MCF 10A (cell line): ENCODE measurements at regions of chr2 and their contacts with region 1.

Region 1: GRCh38 chr2:134118279-134119116 is 135.4 kb upstream of the MGAT5 start:
- DNase-seq: peak; percentile 91
- H3K4me3 Mint-ChIP-seq: peak overlapping the region; percentile 26
- H3K27ac Mint-ChIP-seq: no peak overlapping the region
- H3K4me1 Mint-ChIP-seq: peaks cover 23% of the 10 kb centered on the region
- H3K27me3 Mint-ChIP-seq: no peaks in the 10 kb centered on the region
- CTCF ChIP-seq: peak; percentile 74

Region 2: DNA sequence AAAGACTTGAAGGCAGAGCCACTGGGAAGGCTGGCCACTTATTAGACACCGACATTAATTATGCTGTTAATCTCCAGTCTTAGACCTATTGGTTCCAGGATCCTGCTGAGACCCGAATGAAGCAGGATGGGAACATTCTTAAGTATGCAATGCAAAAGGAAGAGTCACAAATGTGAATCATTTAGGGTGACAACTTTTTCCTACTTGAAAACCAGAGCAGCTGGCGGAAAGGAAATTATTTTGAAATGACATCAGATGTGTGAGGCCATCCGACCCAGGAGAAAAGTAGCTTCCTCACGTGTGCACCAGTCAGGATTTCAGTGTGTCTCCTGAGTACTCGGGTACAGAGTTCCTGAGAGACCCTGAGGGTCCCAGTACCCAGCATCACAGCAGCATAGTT is 327.3 kb before region 1 on chr2:
- CTCF ChIA-PET with region 1: no interaction called
- POLR2A ChIA-PET with region 1: no interaction called
- intact Hi-C with region 1: no loop called
- DNase-seq: no peak
- H3K4me3 Mint-ChIP-seq: no peak overlapping the region
- H3K27ac Mint-ChIP-seq: no peak overlapping the region
- H3K4me1 Mint-ChIP-seq: no peaks in the 10 kb centered on the region
- H3K27me3 Mint-ChIP-seq: no peaks in the 10 kb centered on the region
- CTCF ChIP-seq: no peak

Region 3: GRCh38 chr2:133844214-133844892 is 274.1 kb before region 1 on chr2:
- CTCF ChIA-PET with region 1: no interaction called
- POLR2A ChIA-PET with region 1: no interaction called
- intact Hi-C with region 1: no loop called
- DNase-seq: peak; percentile 84
- H3K4me3 Mint-ChIP-seq: no peak overlapping the region
- H3K27ac Mint-ChIP-seq: no peak overlapping the region
- H3K4me1 Mint-ChIP-seq: peaks cover 15% of the 10 kb centered on the region
- H3K27me3 Mint-ChIP-seq: no peaks in the 10 kb centered on the region
- CTCF ChIP-seq: peak; percentile 90

Region 4: DNA sequence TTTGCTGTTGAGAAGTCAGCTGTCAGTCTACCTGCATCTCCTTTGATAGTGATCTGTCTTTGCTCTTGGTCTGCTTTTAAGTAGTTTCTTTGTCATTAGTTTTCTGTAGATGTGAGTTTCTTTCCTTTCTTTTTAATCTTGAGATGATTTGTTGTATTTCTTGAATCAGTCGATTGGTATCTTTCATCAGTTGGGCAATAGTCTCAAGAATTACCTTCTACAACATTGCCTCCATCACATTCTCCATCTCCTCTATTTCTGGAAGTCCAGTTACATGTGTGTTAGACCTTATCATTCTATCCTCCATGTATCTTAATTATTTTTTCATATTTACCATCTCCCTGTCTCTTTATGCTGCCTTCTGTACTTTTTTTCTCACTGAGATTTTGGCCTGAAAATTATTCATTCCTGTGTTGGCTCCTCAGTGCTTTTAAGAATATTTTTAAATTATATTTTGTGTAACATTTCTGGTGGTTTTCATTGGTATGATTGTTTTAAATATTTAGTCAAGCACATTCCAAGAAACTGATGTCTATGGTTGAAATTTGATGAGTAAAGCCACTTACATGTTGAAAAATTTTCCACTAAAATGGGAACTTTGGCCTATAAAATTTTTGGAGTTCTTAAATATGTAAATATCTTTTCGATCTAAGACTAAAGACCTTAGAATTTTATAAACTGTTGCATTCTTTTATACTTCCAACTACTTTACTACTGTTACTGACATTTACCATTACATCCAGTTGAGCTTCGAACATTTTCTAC is 104.1 kb before region 1 on chr2:
- CTCF ChIA-PET with region 1: no interaction called
- POLR2A ChIA-PET with region 1: no interaction called
- intact Hi-C with region 1: no loop called
- DNase-seq: no peak
- H3K4me3 Mint-ChIP-seq: no peak overlapping the region
- H3K27ac Mint-ChIP-seq: no peak overlapping the region
- H3K4me1 Mint-ChIP-seq: no peaks in the 10 kb centered on the region
- H3K27me3 Mint-ChIP-seq: no peaks in the 10 kb centered on the region
- CTCF ChIP-seq: no peak

Region 5: DNA sequence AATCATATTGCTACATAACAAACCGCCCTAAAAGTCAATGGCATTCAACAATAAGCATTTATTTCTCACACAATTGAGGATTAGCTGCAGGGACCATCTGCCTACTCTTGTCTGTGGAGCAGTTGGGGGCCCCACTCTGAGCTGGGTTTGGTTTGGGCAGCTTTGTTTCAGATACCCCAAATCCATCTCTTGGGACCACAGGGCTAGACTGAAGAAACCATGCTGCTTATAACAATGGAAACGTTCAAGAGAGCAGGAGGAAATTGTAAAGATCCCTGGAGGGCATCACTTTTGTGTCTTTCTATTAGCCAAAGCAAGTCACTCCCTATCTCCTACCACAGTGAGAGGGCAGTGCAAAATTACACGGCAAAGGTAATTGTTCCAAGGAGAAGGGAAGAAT is 11.1 kb before region 1 on chr2:
- CTCF ChIA-PET with region 1: interaction called, 11 read pairs
- POLR2A ChIA-PET with region 1: no interaction called
- intact Hi-C with region 1: no loop called
- DNase-seq: no peak
- H3K4me3 Mint-ChIP-seq: no peak overlapping the region
- H3K27ac Mint-ChIP-seq: no peak overlapping the region
- H3K4me1 Mint-ChIP-seq: no peaks in the 10 kb centered on the region
- H3K27me3 Mint-ChIP-seq: peaks cover 14% of the 10 kb centered on the region
- CTCF ChIP-seq: no peak

Region 6: DNA sequence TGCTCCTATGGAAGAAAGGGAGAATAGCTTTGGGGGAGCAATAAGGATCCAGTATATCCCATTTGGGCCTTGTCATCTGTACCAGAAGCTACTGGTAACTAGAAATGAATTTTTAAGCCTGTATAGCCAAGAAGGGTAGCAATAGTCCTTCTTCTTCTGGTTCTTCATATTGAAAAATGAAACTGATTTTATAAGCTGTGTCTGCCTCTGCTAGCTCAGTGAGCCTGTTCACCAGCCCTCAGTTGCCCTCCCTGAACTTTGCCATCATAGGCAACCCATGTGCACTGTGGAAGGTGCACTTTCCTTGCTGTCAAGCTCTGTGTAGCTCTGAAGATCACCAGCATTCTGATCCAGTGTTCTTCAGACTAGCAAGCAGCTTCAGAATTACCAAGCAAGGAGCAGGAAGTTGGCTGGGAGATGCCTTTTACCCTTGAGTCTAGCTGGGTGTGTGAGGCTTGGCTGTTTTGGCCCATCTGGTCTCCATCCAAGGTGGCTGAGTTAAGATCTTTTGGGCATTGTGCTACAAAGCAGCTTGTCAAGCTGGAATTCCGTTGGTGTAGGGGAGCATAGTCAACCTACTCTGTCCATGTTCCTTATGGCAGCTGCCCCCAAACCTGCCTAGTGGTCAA is 79.6 kb after region 1 on chr2:
- CTCF ChIA-PET with region 1: interaction called, 47 read pairs
- POLR2A ChIA-PET with region 1: interaction called, 3 read pairs
- intact Hi-C with region 1: no loop called
- DNase-seq: no peak
- H3K4me3 Mint-ChIP-seq: no peak overlapping the region
- H3K27ac Mint-ChIP-seq: no peak overlapping the region
- H3K4me1 Mint-ChIP-seq: peaks cover 17% of the 10 kb centered on the region
- H3K27me3 Mint-ChIP-seq: no peaks in the 10 kb centered on the region
- CTCF ChIP-seq: no peak

Region 7: GRCh38 chr2:134245340-134245984 is 127.0 kb after region 1 on chr2:
- CTCF ChIA-PET with region 1: interaction called, 221 read pairs
- POLR2A ChIA-PET with region 1: interaction called, 12 read pairs
- intact Hi-C with region 1: loop called (anchors 1 kb)
- DNase-seq: peak; percentile 70
- H3K4me3 Mint-ChIP-seq: no peak overlapping the region
- H3K27ac Mint-ChIP-seq: no peak overlapping the region
- H3K4me1 Mint-ChIP-seq: peaks cover 6% of the 10 kb centered on the region
- H3K27me3 Mint-ChIP-seq: no peaks in the 10 kb centered on the region
- CTCF ChIP-seq: peak; percentile 75

Region 8: DNA sequence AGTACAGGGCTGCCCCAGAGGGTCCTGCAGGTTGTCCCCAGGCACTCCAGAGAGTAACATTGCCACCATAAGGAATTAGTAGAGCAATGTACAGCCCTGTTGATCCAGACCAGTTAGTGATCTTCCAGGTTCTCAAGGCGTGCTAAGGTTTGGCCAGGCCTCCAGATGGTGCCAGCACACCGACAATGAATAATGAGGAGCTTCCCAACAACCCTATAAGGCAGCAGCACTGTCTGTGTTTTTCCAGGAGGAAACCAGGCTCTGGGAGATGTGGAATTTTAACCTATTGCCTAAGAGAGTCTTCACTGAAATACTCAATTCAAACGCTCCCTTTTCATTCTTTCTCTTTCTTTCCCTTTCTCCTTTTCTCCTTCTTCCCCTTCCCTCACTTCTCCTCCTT is 257.4 kb after region 1 on chr2:
- CTCF ChIA-PET with region 1: interaction called, 9 read pairs
- POLR2A ChIA-PET with region 1: interaction called, 4 read pairs
- intact Hi-C with region 1: loop called (anchors 5 kb)
- DNase-seq: peak; percentile 52
- H3K4me3 Mint-ChIP-seq: no peak overlapping the region
- H3K27ac Mint-ChIP-seq: no peak overlapping the region
- H3K4me1 Mint-ChIP-seq: peaks cover 34% of the 10 kb centered on the region
- H3K27me3 Mint-ChIP-seq: no peaks in the 10 kb centered on the region
- CTCF ChIP-seq: peak; percentile 22

Region 9: DNA sequence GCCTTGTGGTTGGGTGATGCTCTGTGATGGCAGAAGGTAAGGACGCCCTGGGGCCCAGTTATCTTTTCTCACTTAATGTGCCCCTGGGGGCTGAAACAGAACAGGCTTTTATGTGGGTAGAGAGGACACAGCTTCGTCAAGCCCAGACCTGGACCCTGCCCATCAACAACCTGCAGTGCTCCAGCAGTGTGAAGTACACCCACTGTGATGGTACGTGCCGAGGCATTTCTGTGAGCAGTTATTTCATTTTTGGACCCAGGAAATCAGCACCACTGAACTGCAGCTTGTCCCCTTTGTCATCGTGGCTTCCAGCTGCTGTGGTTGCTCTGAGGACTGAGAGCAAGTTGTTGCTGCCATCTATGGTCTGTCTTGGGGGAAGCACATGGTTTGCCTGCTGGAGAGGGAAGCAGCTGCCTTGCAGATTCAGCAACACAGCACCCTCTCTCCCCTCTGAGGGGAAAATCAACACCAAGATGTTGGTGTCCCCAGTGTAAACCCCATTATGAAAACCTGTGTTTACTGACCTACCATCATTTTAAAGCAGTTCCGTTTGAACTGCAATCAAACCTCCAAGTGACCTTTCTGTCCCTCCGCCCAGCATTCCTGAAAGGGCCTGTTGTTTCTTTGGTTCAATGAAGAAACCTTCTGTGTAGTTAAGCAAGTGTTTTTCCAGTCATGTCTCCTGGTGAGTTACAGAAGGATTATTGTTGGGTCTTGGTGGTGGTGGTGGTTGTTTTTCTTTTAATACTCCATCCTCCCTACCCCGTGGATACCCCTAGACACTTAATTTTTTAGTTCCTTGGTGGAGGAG is 293.5 kb after region 1 on chr2:
- CTCF ChIA-PET with region 1: interaction called, 154 read pairs
- POLR2A ChIA-PET with region 1: interaction called, 11 read pairs
- intact Hi-C with region 1: loop called (anchors 1 kb)
- DNase-seq: peak; percentile 66
- H3K4me3 Mint-ChIP-seq: no peak overlapping the region
- H3K27ac Mint-ChIP-seq: no peak overlapping the region
- H3K4me1 Mint-ChIP-seq: peaks cover 23% of the 10 kb centered on the region
- H3K27me3 Mint-ChIP-seq: no peaks in the 10 kb centered on the region
- CTCF ChIP-seq: peak; percentile 54

Region 10: DNA sequence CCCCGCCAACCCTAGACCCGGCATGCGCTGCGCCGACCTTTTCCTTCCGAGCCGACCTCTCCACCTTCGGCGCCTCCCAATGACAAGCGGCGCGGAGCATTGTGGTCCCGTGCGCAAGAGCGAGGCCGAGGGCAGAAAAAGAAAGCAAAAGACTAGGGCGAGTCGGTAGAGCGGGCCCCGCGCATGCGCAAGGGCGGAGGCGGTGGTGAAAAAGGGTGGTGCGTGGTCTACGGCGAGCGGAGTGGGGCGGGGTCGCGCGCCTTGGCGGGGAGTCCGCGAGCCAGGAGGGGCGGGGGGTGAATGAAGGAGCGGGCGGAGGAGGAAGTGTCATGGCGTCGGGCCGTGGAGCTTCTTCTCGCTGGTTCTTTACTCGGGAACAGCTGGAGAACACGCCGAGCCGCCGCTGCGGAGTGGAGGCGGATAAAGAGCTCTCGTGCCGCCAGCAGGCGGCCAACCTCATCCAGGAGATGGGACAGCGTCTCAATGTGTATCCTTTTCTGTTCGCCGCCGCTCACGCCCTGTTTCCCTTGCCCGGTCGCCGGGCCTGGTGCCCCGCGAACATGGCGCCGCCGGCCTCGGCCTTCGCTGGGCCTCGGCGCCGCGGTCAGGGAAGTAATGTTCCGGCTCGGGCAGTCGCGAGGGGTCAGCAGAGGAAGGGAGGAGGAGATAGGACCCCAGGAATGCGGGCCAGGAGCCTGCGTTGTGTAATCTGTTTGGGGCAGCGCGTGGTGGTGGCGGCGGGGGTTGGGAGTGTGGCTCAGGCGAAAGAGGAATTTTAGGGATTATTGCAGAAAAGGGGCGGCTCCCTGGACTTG is 800.2 kb after region 1 on chr2 and contains the start of gene CCNT2:
- CTCF ChIA-PET with region 1: no interaction called
- POLR2A ChIA-PET with region 1: no interaction called
- intact Hi-C with region 1: loop called (anchors 5 kb)
- DNase-seq: peak; percentile 99
- H3K4me3 Mint-ChIP-seq: peak within 1 kb of the TSS; percentile 100
- H3K27ac Mint-ChIP-seq: peak within 1 kb of the TSS; percentile 100
- H3K4me1 Mint-ChIP-seq: peaks cover 12% of the 10 kb centered on the region
- H3K27me3 Mint-ChIP-seq: no peaks in the 10 kb centered on the region
- CTCF ChIP-seq: no peak
- total RNA-seq, gene CCNT2: 38.8 and 39.3 TPM in 2 replicates